B cell (primary cell): ENCODE measurements at regions of chr7 and their contacts with region 1.

Region 1: GRCh38 chr7:43700059-43700501 is 29.2 kb downstream of the COA1 start:
- DNase-seq: peak; percentile 80
- ATAC-seq: peak; percentile 78
- H3K4me3 ChIP-seq: no peak overlapping the region
- H3K4me3 Mint-ChIP-seq: peak overlapping the region; percentile 12
- H3K27ac ChIP-seq: peak overlapping the region in 1 of 2 donors; percentile 37
- H3K27ac Mint-ChIP-seq: peak overlapping the region; percentile 22
- H3K4me1 ChIP-seq: peaks cover 33% of the 10 kb centered on the region in 2 donors
- H3K4me1 Mint-ChIP-seq: peaks cover 25% of the 10 kb centered on the region
- H3K27me3 ChIP-seq: no peaks in the 10 kb centered on the region
- H3K27me3 Mint-ChIP-seq: no peaks in the 10 kb centered on the region
- CTCF ChIP-seq: peak; percentile 91

Region 2: DNA sequence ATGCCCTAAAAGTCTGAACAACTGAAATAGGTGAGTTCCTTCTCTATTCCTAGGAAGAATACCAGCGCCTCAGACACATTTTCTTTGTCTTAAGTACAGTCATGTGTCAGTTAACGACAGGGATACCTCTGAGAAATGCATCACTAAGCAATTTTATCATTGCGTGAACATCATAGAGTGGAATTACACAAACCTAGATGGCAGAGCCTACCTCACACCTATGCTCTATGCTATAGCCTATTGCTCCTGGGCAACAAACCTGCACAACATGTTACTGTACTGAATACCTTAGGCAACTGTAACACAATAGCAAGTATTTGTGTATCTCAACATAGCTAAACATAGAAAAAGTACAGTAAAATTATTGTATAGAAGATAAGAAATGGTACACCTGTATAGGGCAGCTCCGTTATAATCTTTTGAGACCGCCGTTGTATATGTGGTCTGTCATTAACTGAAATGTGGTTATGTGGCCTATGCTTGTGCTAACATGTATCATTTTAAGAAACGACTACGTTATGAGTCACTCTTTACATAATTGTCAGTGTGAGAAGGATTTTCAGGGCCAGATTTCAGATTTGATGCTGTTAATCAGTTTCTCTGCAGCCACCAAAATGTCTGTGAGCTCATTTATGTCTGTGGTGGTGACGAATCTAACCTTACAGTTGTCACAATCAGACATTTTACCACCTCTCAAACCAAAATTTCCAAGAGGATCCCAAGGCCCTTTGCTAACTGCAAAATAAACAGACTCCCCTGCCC is 183.3 kb before region 1 on chr7:
- CTCF ChIA-PET with region 1: no interaction called
- POLR2A ChIA-PET with region 1: no interaction called
- intact Hi-C with region 1: no loop called
- DNase-seq: no peak
- ATAC-seq: no peak
- H3K4me3 ChIP-seq: no peak overlapping the region
- H3K4me3 Mint-ChIP-seq: no peak overlapping the region
- H3K27ac ChIP-seq: no peak overlapping the region
- H3K27ac Mint-ChIP-seq: no peak overlapping the region
- H3K4me1 ChIP-seq: no peaks in the 10 kb centered on the region
- H3K4me1 Mint-ChIP-seq: no peaks in the 10 kb centered on the region
- H3K27me3 ChIP-seq: peaks cover 0 to 2% (median 0%) of the 10 kb centered on the region in 4 experiments
- H3K27me3 Mint-ChIP-seq: peaks cover 24% of the 10 kb centered on the region
- CTCF ChIP-seq: no peak

Region 3: GRCh38 chr7:43572516-43573049 is 127.5 kb before region 1 on chr7:
- CTCF ChIA-PET with region 1: interaction called, 17 read pairs
- POLR2A ChIA-PET with region 1: no interaction called
- intact Hi-C with region 1: no loop called
- DNase-seq: peak; percentile 5
- ATAC-seq: no peak
- H3K4me3 ChIP-seq: no peak overlapping the region
- H3K4me3 Mint-ChIP-seq: no peak overlapping the region
- H3K27ac ChIP-seq: no peak overlapping the region
- H3K27ac Mint-ChIP-seq: no peak overlapping the region
- H3K4me1 ChIP-seq: no peaks in the 10 kb centered on the region
- H3K4me1 Mint-ChIP-seq: no peaks in the 10 kb centered on the region
- H3K27me3 ChIP-seq: no peaks in the 10 kb centered on the region
- H3K27me3 Mint-ChIP-seq: no peaks in the 10 kb centered on the region
- CTCF ChIP-seq: no peak

Region 4: DNA sequence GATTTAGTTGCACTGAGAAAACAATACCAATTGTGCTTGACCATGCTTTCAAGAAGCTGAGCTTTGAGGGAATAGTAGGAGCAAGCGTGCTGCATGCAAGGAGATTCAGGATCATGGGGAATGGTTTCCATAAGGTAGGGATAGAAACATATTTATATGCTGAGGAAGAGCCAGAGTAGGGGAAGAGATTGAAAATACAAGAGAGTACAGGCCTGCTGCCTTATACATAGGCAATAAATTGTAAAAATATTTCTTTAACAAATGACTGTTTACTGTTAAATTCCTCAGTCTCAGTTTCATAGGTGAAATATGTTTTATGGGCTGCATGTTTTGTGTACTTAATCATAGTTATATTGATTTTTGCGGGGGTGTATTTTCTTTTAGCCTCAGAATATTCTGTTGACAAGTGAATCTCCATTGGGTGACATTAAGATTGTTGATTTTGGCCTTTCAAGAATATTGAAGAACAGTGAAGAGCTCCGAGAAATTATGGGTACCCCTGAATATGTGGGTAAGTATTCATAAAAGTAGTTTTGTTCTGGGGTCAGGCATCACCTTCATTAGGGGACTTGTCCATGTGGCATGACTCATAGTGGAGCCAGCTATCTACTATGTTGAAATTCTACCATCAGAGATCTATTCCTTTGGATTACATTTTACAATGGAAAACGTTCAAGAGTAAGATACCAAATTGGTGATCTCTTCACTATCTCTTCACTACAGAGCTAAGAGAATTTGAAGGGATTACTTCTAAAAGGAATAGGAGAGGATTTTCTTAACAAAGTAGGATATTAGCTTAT is 80.7 kb before region 1 on chr7:
- CTCF ChIA-PET with region 1: interaction called, 24 read pairs
- POLR2A ChIA-PET with region 1: no interaction called
- intact Hi-C with region 1: no loop called
- DNase-seq: no peak
- ATAC-seq: no peak
- H3K4me3 ChIP-seq: no peak overlapping the region
- H3K4me3 Mint-ChIP-seq: no peak overlapping the region
- H3K27ac ChIP-seq: peak overlapping the region in 1 of 2 donors; percentile 56
- H3K27ac Mint-ChIP-seq: no peak overlapping the region
- H3K4me1 ChIP-seq: peaks cover 65 to 66% of the 10 kb centered on the region in 2 donors
- H3K4me1 Mint-ChIP-seq: peaks cover 42% of the 10 kb centered on the region
- H3K27me3 ChIP-seq: no peaks in the 10 kb centered on the region
- H3K27me3 Mint-ChIP-seq: no peaks in the 10 kb centered on the region
- CTCF ChIP-seq: no peak

Region 5: GRCh38 chr7:43630482-43630881 is 69.6 kb before region 1 on chr7:
- CTCF ChIA-PET with region 1: interaction called, 58 read pairs
- POLR2A ChIA-PET with region 1: no interaction called
- intact Hi-C with region 1: loop called (anchors 1 kb)
- DNase-seq: no peak
- ATAC-seq: no peak
- H3K4me3 ChIP-seq: no peak overlapping the region
- H3K4me3 Mint-ChIP-seq: no peak overlapping the region
- H3K27ac ChIP-seq: peak overlapping the region in 1 of 2 donors; percentile 68
- H3K27ac Mint-ChIP-seq: peak overlapping the region; percentile 50
- H3K4me1 ChIP-seq: peaks cover 25% of the 10 kb centered on the region in 2 donors
- H3K4me1 Mint-ChIP-seq: peaks cover 71% of the 10 kb centered on the region
- H3K27me3 ChIP-seq: no peaks in the 10 kb centered on the region
- H3K27me3 Mint-ChIP-seq: no peaks in the 10 kb centered on the region
- CTCF ChIP-seq: no peak

Region 6: DNA sequence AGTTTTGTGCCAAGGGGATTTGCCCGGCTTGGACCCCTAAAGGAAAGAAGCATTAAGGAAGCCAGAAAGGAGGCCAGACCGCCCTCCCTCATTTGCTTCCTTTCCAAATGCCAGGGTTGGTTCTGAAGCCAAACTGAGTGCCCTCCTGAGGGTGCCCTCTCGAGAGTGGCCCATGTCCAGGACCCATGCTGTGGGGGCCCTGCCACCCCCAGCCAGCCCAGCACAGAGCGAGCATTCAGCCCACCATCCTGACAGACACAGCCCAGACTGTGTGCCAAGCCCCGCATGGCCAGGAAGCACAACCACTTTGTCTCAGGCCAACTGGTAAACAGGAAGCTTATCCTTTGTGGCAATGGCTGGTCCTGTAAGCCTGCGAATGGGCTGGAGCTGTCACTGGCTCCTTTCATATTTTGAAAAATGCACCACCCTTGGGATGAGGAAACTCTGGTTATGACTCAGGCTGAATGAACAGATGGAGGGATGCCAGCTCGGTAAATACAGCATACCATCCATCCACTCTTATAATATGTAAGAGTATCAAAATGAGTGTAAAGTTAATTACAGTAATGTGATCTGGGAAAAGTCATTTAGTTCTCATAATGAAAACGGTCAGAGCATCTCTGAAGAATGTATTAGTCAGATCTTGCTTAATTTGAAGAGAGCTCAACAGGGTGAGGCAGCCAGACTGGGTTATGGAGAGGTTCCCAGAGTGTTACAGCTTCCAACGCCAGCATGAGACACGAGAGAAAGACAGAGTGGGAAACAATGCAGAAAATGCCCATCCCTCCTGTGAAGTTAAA is 52.2 kb before region 1 on chr7:
- CTCF ChIA-PET with region 1: interaction called, 99 read pairs
- POLR2A ChIA-PET with region 1: interaction called, 13 read pairs
- intact Hi-C with region 1: loop called (anchors 1 kb)
- DNase-seq: peak; percentile 35
- ATAC-seq: no peak
- H3K4me3 ChIP-seq: peak overlapping the region; percentile 24 to 73 (median 48)
- H3K4me3 Mint-ChIP-seq: peak overlapping the region; percentile 81
- H3K27ac ChIP-seq: peak overlapping the region; percentile 87 to 97
- H3K27ac Mint-ChIP-seq: peak overlapping the region; percentile 87
- H3K4me1 ChIP-seq: peaks cover 93 to 97% of the 10 kb centered on the region in 2 donors
- H3K4me1 Mint-ChIP-seq: peaks cover 90% of the 10 kb centered on the region
- H3K27me3 ChIP-seq: no peaks in the 10 kb centered on the region
- H3K27me3 Mint-ChIP-seq: no peaks in the 10 kb centered on the region
- CTCF ChIP-seq: no peak

Region 7: GRCh38 chr7:43686991-43687390 is 13.1 kb before region 1 on chr7:
- CTCF ChIA-PET with region 1: interaction called, 23 read pairs
- POLR2A ChIA-PET with region 1: no interaction called
- intact Hi-C with region 1: loop called (anchors 2 kb)
- DNase-seq: no peak
- ATAC-seq: no peak
- H3K4me3 ChIP-seq: no peak overlapping the region
- H3K4me3 Mint-ChIP-seq: no peak overlapping the region
- H3K27ac ChIP-seq: no peak overlapping the region
- H3K27ac Mint-ChIP-seq: no peak overlapping the region
- H3K4me1 ChIP-seq: peaks cover 22 to 24% of the 10 kb centered on the region in 2 donors
- H3K4me1 Mint-ChIP-seq: peaks cover 70% of the 10 kb centered on the region
- H3K27me3 ChIP-seq: no peaks in the 10 kb centered on the region
- H3K27me3 Mint-ChIP-seq: no peaks in the 10 kb centered on the region
- CTCF ChIP-seq: no peak

Region 8: GRCh38 chr7:43834463-43835251 is 134.6 kb after region 1 on chr7:
- CTCF ChIA-PET with region 1: interaction called, 19 read pairs
- POLR2A ChIA-PET with region 1: no interaction called
- intact Hi-C with region 1: no loop called
- DNase-seq: peak; percentile 72
- ATAC-seq: peak; percentile 46
- H3K4me3 ChIP-seq: peak overlapping the region in 4 of 5 experiments; percentile 35 to 68 (median 50)
- H3K4me3 Mint-ChIP-seq: peak overlapping the region; percentile 93
- H3K27ac ChIP-seq: no peak overlapping the region
- H3K27ac Mint-ChIP-seq: peak overlapping the region; percentile 92
- H3K4me1 ChIP-seq: peaks cover 13 to 14% of the 10 kb centered on the region in 2 donors
- H3K4me1 Mint-ChIP-seq: peaks cover 18% of the 10 kb centered on the region
- H3K27me3 ChIP-seq: no peaks in the 10 kb centered on the region
- H3K27me3 Mint-ChIP-seq: peaks cover under 1% of the 10 kb centered on the region
- CTCF ChIP-seq: no peak